ENCODE measurements at regions of chr7 and their contacts with region 1.

Region 1: DNA sequence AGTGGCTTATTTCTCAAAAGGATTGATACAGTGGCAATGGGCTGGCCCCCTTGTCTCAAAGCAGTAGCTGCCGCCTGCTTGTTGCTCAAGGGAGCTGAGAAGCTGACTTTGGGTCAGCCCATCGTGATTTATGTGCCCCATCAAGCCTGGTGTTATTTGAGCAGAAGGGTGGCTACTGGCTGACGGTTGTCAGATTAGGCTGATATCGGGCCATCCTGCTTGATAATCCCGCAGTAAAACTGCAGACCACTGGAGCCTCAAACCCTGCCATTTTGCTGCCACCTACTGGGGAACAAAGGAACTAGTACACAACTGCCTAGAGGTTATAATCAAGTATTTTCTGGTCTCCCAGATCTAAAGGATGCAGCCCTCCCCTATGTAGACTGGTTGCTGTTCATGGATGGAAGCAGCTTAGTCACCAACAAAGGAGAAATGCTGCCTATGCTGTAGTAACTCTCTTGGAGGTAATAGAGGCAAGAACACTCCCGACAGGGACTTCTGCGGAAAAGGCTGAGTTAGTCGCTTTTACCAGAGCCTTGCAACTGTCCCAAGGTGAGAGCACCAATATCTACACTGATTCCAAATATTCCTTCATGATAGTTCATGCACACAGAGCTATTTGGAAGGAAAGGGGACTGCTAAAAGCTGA is 65.9 kb upstream of the ZNF92 start:
- DNase-seq: peak in 40 of 42 donors; percentile 4 to 87 (median 64)

Region 2: DNA sequence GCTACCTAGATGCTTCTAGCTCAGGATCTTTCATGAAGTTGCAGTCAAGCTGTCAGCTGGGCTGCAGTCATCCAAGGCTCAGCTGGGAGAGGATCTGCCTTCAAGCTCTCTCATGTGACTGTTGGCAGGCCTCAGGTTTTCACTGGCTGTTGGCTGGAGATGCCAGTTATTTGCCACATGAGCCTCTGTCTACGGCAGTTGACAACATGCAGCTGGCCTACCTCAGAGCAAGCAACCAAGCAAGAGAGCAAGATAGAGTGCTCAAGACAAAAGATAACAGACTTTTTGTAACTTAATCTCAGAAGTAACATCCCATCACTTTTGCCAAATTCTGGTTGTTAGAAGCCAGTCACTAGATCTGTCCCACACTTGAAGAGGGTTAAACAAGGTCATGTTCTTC is 1023.2 kb after region 1 on chr7:
- intact Hi-C with region 1: loop called (anchors 10 kb)
- DNase-seq: peak in 21 of 42 donors; percentile 7 to 66 (median 32)